Motor neuron (in vitro differentiated cells): ENCODE measurements at regions of chr11 and their contacts with region 1.

Region 1: DNA sequence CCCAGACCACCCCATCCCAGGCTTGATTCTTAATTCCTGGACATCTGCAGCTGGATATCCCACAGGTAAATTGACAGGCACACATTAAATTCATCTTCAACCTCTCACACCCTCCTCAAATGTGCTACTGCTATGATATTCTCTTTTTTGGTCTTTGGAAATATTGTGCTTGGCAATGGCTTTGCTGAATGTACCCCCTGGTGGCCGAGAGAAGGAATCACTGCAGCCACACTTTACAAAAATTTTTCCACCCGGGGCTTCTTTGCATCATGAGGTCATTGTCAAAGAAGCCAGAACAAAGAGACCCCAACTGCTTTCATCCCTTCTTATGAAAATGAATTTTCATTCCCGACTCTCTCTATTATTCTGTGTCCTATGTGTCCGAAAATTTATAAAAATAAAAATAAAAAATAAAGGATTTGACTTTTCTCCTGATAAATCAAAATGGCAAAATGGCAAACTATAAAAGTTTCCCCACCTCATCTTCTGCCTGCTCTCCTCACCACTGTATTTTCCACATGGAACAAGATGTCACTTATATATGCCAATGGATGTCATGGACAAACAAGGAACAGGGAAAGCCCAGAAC is 15.0 kb upstream of the CYB5R2 start:
- ATAC-seq: peak in 3 of 8 experiments; percentile 34 to 61 (median 45)
- H3K4me3 ChIP-seq: no peak overlapping the region
- H3K27ac ChIP-seq: no peak overlapping the region
- H3K4me1 ChIP-seq: no peaks in the 10 kb centered on the region

Region 2: GRCh38 chr11:7098235-7098832 is 590.0 kb before region 1 on chr11:
- in situ Hi-C with region 1: loop called in 3 of 9 experiments (anchors 25 kb)
- ATAC-seq: peak; percentile 43 to 84 (median 61)
- H3K4me3 ChIP-seq: no peak overlapping the region
- H3K27ac ChIP-seq: no peak overlapping the region
- H3K4me1 ChIP-seq: no peaks in the 10 kb centered on the region

Region 3: GRCh38 chr11:7115780-7116179 is 572.6 kb before region 1 on chr11:
- in situ Hi-C with region 1: loop called in 1 of 9 experiments (anchors 25 kb)
- ATAC-seq: peak in 1 of 8 experiments; percentile 72
- H3K4me3 ChIP-seq: no peak overlapping the region
- H3K27ac ChIP-seq: no peak overlapping the region
- H3K4me1 ChIP-seq: no peaks in the 10 kb centered on the region

Region 4: DNA sequence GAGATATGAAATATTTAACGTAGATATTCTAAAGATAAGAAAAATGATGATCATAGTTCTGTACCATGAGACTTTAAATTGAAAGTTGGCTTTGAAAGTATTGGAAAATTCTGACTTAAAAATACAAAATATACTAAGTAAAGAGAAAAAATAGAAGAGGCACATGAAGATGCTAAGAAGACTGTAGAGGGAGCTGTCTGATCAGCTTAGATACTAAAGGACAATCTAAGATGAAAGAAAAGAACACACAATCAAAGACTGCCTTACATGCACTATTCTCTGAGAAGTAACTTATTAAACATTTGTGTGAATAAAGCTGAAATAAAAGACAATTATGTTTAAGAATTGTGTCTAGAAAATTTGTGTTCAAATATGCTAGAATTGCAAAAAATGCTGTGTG is 544.4 kb before region 1 on chr11:
- in situ Hi-C with region 1: loop called in 1 of 9 experiments (anchors 25 kb)
- ATAC-seq: peak in 4 of 8 experiments; percentile 20 to 53 (median 30)
- H3K4me3 ChIP-seq: no peak overlapping the region
- H3K27ac ChIP-seq: no peak overlapping the region
- H3K4me1 ChIP-seq: no peaks in the 10 kb centered on the region

Region 5: GRCh38 chr11:7787239-7787638 is 98.9 kb after region 1 on chr11:
- in situ Hi-C with region 1: no loop called
- ATAC-seq: no peak
- H3K4me3 ChIP-seq: no peak overlapping the region
- H3K27ac ChIP-seq: no peak overlapping the region
- H3K4me1 ChIP-seq: no peaks in the 10 kb centered on the region

Region 6: DNA sequence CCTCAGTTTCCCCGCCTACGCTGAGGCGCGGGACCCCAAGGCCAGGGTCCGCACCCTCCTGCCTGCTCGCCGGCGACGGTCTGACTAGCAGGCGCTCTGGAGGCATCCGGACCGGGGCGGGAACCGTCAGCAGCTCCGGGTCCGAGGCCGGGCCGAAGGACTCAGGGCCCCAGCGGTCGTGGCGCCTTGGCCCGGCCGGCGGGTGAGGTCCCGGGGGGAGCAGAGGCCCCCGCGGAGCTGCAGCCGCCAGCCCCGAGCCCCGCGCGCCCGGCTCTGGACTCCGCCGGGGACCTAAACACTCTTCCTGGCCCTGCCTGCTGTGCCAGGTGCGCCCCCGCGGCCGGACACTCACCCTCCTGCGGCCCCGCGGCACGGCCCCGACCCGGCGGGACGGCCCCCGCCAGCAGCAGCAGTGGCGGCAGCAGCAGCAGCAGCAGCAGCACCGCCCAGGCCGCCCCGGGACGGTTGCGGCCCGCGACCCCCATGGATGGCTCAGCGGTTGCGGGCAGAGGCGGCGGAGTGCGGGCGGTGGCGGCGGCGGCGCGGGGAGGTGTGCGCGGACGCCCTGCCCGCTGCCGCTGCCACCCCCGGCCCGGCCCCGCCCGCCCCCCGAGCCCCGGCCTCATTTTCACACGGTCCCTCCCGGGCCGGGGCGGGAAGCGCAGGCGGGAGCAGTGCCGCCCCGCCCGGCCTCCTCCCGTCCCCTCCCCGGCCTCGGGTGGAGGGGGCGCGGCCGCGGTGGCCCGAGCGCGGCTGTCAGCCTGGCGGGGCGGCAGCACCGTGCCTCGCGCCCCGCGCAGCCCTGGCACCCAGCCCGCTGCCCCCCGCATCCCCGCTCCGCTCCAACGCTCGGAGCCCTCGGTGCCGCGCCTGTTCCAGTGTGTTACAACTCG is 1403.0 kb after region 1 on chr11 and contains the start of gene SCUBE2:
- in situ Hi-C with region 1: no loop called
- ATAC-seq: peak; percentile 56 to 73 (median 64)
- H3K4me3 ChIP-seq: peak within 1 kb of the TSS; percentile 31 to 40 (median 33)
- H3K27ac ChIP-seq: no peak within 1 kb of the TSS
- H3K4me1 ChIP-seq: peaks cover 17 to 19% of the 10 kb centered on the region in 2 donors
- total RNA-seq, gene SCUBE2: 0.94 to 25.4 (median 3.4) TPM